HepG2 (cell line): ENCODE measurements at regions of chr15 and their contacts with region 1.

Region 1: DNA sequence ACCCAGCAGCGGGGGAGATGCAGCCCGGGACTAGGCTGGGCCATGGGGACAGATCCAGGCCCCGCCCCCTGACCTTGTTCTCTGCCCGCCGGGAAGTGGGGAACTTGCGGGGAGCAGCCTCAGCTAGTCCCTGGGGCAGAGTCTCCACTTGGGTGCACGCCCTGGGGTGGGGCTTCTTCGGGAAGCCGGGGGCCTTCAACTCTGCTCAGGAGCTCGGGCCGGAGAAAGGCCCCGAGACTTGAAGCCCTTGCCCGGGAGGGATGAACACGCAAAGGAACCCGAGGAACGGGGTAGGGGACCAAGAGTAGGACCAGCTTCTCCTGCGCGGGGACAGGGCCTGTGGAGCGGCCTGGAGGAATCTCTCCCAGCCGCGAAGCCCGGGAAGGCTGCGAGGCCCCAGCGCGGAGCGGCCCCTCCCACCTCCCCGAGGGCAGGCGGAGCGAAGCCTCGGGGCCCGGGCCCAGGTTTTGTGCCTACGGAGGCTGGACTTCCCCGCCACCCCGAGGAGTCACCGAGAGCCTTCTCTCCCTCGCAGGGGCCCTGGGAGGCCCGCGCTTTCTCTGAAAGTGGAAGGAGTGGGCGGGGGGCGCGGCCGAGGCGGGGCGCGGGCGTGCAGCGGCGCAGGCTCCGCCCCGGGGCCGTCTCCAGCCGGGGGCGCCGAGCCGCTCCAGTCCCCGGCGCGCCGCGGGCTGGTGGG is at the start of gene ITPKA:
- DNase-seq: peak; percentile 88
- ATAC-seq: peak; percentile 69
- H3K4me3 ChIP-seq: peak within 1 kb of the TSS; percentile 78 to 85 (median 83)
- H3K27ac ChIP-seq: peak within 1 kb of the TSS; percentile 97
- H3K4me1 ChIP-seq: peaks cover 31% of the 10 kb centered on the region
- H3K27me3 ChIP-seq: no peaks in the 10 kb centered on the region
- CTCF ChIP-seq: no peak
- EP300 ChIP-seq: no peak; a peak in 1 of 4 replicates
- POLR2A ChIP-seq: peak in 1 of 2 experiments; percentile 70; a peak in 2 of 4 replicates
- RAD21 ChIP-seq: peak; percentile 10; the same call in 1 of the 2 replicates
- total RNA-seq, gene ITPKA: 29.7 and 41.3 TPM in 2 replicates

Region 2: GRCh38 chr15:41283653-41284426 is 209.5 kb before region 1 on chr15:
- CTCF ChIA-PET with region 1: no interaction called
- POLR2A ChIA-PET with region 1: no interaction called
- in situ Hi-C with region 1: no loop called
- intact Hi-C with region 1: loop called (anchors 5 kb)
- DNase-seq: peak; percentile 97
- ATAC-seq: peak; percentile 96
- H3K4me3 ChIP-seq: peak overlapping the region; percentile 82 to 93 (median 91)
- H3K27ac ChIP-seq: peak overlapping the region; percentile 86
- H3K4me1 ChIP-seq: peaks cover 76% of the 10 kb centered on the region
- H3K27me3 ChIP-seq: no peaks in the 10 kb centered on the region; a peak in 1 of 5 replicates
- CTCF ChIP-seq: 0 out of 2 replicates have a peak, but pooled peaks have one; percentile 7
- EP300 ChIP-seq: peak in 1 of 2 experiments; percentile 14; a peak in 1 of 4 replicates
- POLR2A ChIP-seq: peak; percentile 85 to 92
- RAD21 ChIP-seq: peak; percentile 54

Region 3: DNA sequence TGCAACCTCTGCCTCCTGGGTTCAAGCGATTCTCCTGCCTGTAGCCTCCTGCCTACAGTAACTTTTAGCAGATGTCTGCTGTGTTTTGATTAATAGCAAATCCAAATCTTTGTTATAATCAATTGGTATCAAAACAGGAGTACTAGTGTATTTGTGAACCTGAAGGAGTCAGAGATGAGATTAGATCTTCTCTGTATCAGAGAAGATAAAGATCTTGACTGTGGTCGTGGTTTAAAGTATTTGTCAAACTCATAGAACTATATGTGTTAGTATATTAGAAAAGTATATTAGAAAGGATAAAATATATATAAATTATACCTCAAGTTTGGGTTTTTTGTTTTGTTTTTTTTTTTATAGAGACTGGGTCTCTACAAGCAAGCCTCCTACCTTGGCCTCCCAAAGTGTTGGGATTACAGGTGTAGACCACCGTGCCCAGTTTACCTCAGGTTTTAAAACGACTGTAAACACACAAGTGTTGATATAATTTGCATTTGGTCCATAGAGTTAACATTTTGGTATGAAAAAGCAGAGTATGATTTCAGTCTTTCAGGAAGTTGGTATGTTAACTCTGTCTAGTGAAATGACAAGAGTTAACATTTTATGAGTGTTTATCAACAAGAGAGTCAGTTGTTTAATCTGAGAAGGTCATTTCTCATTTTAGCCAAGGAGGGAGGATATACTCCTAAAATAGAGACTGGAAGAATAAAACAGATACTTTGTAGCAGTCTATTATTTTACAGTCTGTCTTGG is 58.1 kb before region 1 on chr15:
- CTCF ChIA-PET with region 1: no interaction called
- POLR2A ChIA-PET with region 1: no interaction called
- in situ Hi-C with region 1: no loop called
- intact Hi-C with region 1: no loop called
- DNase-seq: no peak
- ATAC-seq: no peak
- H3K4me3 ChIP-seq: no peak overlapping the region
- H3K27ac ChIP-seq: no peak overlapping the region
- H3K4me1 ChIP-seq: no peaks in the 10 kb centered on the region
- H3K27me3 ChIP-seq: no peaks in the 10 kb centered on the region
- CTCF ChIP-seq: no peak
- EP300 ChIP-seq: no peak
- POLR2A ChIP-seq: no peak
- RAD21 ChIP-seq: no peak

Region 4: GRCh38 chr15:41476416-41477048 is 16.8 kb before region 1 on chr15:
- CTCF ChIA-PET with region 1: no interaction called
- POLR2A ChIA-PET with region 1: interaction called, 15 read pairs
- in situ Hi-C with region 1: no loop called
- intact Hi-C with region 1: no loop called
- DNase-seq: no peak
- ATAC-seq: peak; percentile 27; the same call in 2 of the 3 replicates
- H3K4me3 ChIP-seq: no peak overlapping the region
- H3K27ac ChIP-seq: no peak overlapping the region
- H3K4me1 ChIP-seq: peaks cover 7% of the 10 kb centered on the region; the same call in 1 of the 2 replicates
- H3K27me3 ChIP-seq: no peaks in the 10 kb centered on the region
- CTCF ChIP-seq: no peak
- EP300 ChIP-seq: no peak
- POLR2A ChIP-seq: no peak
- RAD21 ChIP-seq: no peak

Region 5: DNA sequence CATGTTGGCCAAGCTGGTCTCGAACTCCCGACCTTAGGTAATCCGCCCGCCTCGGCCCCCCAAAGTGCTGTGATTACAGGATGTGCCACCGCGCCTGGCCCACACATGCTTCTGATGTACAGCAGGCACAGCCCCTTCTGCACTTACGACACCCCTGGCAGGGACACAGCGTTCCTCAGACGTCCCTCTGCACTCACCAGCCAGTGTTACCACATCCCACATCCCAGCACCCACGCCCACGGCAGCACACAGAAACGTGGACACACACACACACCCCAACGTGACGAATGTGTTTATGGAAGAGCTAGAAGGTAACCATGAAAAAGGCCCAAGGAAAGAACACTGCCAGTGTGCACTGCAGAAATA is 51.3 kb after region 1 on chr15:
- CTCF ChIA-PET with region 1: no interaction called
- POLR2A ChIA-PET with region 1: interaction called, 15 read pairs
- in situ Hi-C with region 1: no loop called
- intact Hi-C with region 1: loop called (anchors 1 kb)
- DNase-seq: no peak
- ATAC-seq: peak; percentile 10
- H3K4me3 ChIP-seq: peak overlapping the region in 2 of 3 experiments; percentile 65 to 85; a peak in 3 of 6 replicates
- H3K27ac ChIP-seq: no peak overlapping the region
- H3K4me1 ChIP-seq: peaks cover 40% of the 10 kb centered on the region
- H3K27me3 ChIP-seq: no peaks in the 10 kb centered on the region
- CTCF ChIP-seq: no peak
- EP300 ChIP-seq: no peak
- POLR2A ChIP-seq: no peak
- RAD21 ChIP-seq: no peak

Region 6: DNA sequence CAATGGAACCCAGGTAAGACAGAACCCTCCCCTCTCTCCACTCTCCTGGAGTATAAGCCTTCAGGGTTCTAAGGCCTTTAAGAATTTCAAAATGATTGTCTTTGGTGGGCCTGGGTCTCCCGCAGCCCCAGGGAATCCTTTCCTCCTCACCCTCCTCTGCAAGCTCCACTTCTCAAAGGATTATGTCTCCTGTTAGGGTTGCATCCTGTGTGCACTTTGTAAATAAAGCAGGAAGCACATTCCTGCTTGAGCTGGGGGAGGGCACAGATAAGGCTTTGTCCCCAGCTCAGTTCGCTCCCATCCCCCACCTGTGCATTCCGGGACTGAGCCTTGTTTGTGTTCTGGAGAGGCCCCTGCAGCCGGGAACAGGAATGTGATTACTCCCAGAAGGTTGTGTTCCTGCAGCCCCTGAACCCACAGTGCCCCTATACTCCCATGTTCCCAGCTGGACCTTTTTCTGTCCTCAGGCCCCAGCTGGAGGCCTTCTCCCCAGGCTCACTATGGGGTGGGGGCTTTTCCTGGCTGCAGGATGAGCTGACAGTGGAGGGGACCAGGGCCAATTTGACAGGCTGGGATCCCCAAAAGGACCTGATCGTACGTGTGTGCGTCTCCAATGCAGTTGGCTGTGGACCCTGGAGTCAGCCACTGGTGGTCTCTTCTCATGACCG is 75.1 kb after region 1 on chr15:
- CTCF ChIA-PET with region 1: no interaction called
- POLR2A ChIA-PET with region 1: interaction called, 12 read pairs
- in situ Hi-C with region 1: no loop called
- intact Hi-C with region 1: no loop called
- DNase-seq: peak; percentile 98
- ATAC-seq: peak; percentile 88
- H3K4me3 ChIP-seq: peak overlapping the region in 2 of 3 experiments; percentile 14 to 54; a peak in 4 of 6 replicates
- H3K27ac ChIP-seq: peak overlapping the region; percentile 91
- H3K4me1 ChIP-seq: peaks cover 84% of the 10 kb centered on the region
- H3K27me3 ChIP-seq: no peaks in the 10 kb centered on the region
- CTCF ChIP-seq: peak; percentile 42
- EP300 ChIP-seq: peak; percentile 83 to 94
- POLR2A ChIP-seq: peak in 1 of 2 experiments; percentile 49; a peak in 2 of 4 replicates
- RAD21 ChIP-seq: 0 out of 2 replicates have a peak, but pooled peaks have one; percentile 53

Region 7: DNA sequence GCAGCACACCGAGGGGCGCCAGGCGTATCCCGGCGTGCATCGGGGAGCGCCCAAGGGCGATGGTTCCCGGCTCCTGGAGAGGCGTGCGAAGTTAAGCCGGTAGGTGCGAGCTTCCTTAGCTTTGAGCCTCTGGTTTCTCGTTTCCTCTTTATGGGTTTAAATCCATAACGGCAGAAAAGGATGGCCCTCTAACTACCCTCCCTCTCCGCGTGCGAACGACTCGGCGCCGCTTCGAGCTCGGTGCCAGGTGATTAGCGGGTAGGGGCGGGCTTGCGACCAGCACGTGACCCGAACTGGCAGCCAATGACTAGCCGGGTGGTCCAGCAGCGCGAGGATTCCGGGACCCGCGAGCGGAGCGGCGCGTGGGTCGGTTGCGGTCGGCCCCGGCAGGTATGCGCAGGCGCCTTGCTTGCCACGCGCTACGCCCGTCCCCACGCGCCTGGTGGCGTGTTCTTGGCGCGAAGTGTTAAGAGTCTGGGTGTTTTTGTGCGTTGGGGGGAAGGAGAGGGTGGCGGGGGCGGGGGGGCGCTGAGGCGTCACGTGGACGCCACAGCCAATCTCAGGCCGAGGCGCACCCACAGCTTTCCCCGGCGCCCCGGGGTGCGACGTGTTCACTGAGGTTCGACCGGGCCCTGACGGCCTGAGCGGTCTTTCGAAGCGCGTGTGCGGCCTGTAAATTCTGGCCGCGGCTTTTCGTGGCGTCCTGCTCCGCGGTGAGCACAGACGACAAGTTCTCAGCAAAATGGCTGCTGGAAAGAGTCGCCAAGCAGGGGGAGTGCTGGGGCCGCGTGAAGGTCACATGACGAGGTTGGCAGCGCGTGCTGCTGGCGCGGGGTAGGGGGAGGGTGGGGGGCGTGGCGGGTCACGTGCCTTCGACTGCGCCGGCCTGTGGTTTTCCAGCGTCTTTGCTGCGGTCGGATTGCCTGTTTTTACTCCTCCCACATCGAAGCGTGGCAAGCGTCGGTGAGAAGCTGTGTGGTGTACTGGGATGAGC is 128.1 kb after region 1 on chr15:
- CTCF ChIA-PET with region 1: no interaction called
- POLR2A ChIA-PET with region 1: interaction called, 6 read pairs
- in situ Hi-C with region 1: no loop called
- intact Hi-C with region 1: loop called (anchors 2 kb)
- DNase-seq: peak; percentile 78
- ATAC-seq: peak; percentile 95
- H3K4me3 ChIP-seq: peak overlapping the region; percentile 36 to 63 (median 59); a peak in 5 of 6 replicates
- H3K27ac ChIP-seq: peak overlapping the region; percentile 83
- H3K4me1 ChIP-seq: peaks cover 26% of the 10 kb centered on the region
- H3K27me3 ChIP-seq: no peaks in the 10 kb centered on the region
- CTCF ChIP-seq: no peak
- EP300 ChIP-seq: peak in 1 of 2 experiments; percentile 38; a peak in 1 of 4 replicates
- POLR2A ChIP-seq: peak; percentile 60 to 81
- RAD21 ChIP-seq: peak; percentile 10; the same call in 1 of the 2 replicates

Region 8: DNA sequence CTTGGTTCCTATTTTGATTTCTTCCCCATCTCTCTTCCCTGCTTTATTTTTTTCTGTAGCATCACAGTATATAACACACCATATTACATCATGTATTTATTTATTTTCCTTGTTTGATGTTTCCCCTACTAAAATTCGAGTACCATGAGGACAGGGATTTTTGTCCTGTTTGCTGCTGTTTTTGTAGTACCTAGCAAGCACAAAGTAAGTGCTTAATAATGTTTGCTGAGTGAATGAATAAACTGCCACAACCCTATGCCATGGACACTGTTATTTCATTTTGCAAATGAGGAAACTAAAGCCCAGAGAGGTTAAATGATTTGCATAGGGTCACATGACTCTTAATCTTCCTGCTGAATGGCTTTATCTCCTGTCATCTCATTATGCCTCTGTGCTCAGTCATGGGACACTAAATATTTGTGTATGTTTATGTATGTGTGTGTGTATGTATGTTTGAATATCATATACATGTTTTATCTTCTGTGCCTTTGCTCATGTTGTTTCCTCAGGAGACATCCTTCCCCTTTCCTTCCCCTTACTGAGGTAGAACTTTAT is 140.8 kb after region 1 on chr15:
- CTCF ChIA-PET with region 1: no interaction called
- POLR2A ChIA-PET with region 1: no interaction called
- in situ Hi-C with region 1: no loop called
- intact Hi-C with region 1: no loop called
- DNase-seq: no peak
- ATAC-seq: no peak
- H3K4me3 ChIP-seq: no peak overlapping the region
- H3K27ac ChIP-seq: no peak overlapping the region
- H3K4me1 ChIP-seq: peaks cover 58% of the 10 kb centered on the region
- H3K27me3 ChIP-seq: no peaks in the 10 kb centered on the region
- CTCF ChIP-seq: no peak
- EP300 ChIP-seq: no peak
- POLR2A ChIP-seq: no peak
- RAD21 ChIP-seq: no peak